Activated CD4-positive, alpha-beta memory T cell treated with anti-CD3 and anti-CD28 coated beads for 36 hours (primary cell): ENCODE measurements at regions of chr7 and their contacts with region 1.

Region 1: DNA sequence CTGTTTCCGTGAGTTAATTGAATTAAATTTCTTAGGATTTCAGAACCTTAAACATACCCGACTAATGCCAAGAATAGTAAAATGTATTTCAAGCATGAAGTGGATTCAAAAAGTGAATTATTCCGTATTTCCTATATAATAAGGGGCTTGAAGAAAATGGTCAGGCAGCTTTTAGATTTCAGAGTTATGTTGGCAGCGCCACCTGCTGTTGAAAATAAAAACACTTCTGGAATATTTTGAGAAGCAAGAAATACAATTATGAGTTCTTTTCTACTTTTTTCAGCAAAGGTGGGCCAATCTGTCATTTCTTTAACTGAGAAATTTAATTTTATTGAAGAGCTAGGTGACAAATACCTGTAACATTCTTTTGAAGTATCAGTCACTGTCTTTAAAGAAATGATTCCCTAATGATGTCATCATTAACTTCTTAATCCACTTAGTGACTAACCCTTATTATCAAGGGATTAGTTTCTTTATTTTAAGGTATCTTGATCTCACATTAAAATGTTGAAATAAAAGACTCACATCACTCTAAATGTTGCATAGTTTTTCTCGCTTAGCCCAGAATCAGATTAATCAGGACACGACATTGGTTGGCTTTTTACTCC is 36.6 kb upstream of the AGR3 start:
- DNase-seq: no peak
- H3K4me3 Mint-ChIP-seq: no peak overlapping the region
- H3K27ac Mint-ChIP-seq: no peak overlapping the region
- H3K4me1 Mint-ChIP-seq: peaks cover 7% of the 10 kb centered on the region
- H3K27me3 Mint-ChIP-seq: no peaks in the 10 kb centered on the region

Region 2: DNA sequence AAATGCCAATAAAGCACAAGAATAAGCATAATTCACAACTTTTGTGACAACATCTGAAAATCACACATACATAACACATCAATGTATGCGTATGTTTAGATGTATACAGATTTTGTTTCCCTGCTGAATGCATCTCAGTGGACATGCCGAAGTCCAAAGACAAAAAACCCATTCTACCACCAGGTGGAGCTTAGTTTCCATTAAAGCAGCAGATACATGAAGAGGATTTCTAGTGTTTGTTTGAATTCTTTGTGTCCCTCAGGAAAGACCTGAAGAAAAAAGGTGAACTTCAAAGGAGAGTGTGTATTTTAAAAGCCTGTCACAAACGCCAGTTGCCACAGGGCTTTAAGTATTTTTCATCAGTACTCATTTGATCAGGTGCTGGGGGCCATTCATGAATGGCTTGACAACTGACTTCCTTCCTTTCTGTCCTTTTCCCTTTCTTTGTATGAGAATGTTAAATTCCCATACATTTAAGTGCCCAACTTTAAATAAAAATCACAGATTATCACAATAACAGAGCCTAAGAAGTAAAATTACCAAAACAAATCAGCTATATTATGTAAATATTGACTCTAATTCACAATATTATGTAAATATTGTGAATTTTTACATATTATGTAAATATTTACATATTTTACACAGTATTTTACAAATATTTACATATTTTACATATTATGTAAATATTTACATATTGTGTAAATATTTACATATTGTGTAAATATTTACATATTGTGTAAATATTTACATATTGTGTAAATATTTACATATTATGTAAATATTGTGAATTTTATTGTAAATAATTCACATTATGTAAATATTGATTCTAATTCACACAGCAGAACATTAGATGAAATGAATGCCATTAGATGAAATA is 840.1 kb before region 1 on chr7:
- CTCF ChIA-PET with region 1: interaction called, 3 read pairs
- POLR2A ChIA-PET with region 1: no interaction called
- intact Hi-C with region 1: loop called (anchors 5 kb)
- DNase-seq: no peak
- H3K4me3 Mint-ChIP-seq: no peak overlapping the region
- H3K27ac Mint-ChIP-seq: no peak overlapping the region
- H3K4me1 Mint-ChIP-seq: no peaks in the 10 kb centered on the region
- H3K27me3 Mint-ChIP-seq: no peaks in the 10 kb centered on the region

Region 3: GRCh38 chr7:16409777-16410176 is 508.6 kb before region 1 on chr7:
- CTCF ChIA-PET with region 1: no interaction called
- POLR2A ChIA-PET with region 1: no interaction called
- intact Hi-C with region 1: no loop called
- DNase-seq: no peak
- H3K4me3 Mint-ChIP-seq: no peak overlapping the region
- H3K27ac Mint-ChIP-seq: no peak overlapping the region
- H3K4me1 Mint-ChIP-seq: no peaks in the 10 kb centered on the region
- H3K27me3 Mint-ChIP-seq: no peaks in the 10 kb centered on the region

Region 4: GRCh38 chr7:16604054-16604453 is 314.3 kb before region 1 on chr7:
- CTCF ChIA-PET with region 1: interaction called, 9 read pairs
- POLR2A ChIA-PET with region 1: no interaction called
- intact Hi-C with region 1: loop called (anchors 1 kb)
- DNase-seq: no peak
- H3K4me3 Mint-ChIP-seq: no peak overlapping the region
- H3K27ac Mint-ChIP-seq: no peak overlapping the region
- H3K4me1 Mint-ChIP-seq: no peaks in the 10 kb centered on the region
- H3K27me3 Mint-ChIP-seq: no peaks in the 10 kb centered on the region

Region 5: GRCh38 chr7:16801111-16801542 is 117.3 kb before region 1 on chr7:
- CTCF ChIA-PET with region 1: interaction called, 48 read pairs
- POLR2A ChIA-PET with region 1: no interaction called
- intact Hi-C with region 1: loop called (anchors 1 kb)
- DNase-seq: no peak
- H3K4me3 Mint-ChIP-seq: no peak overlapping the region
- H3K27ac Mint-ChIP-seq: no peak overlapping the region
- H3K4me1 Mint-ChIP-seq: no peaks in the 10 kb centered on the region
- H3K27me3 Mint-ChIP-seq: peaks cover 7% of the 10 kb centered on the region

Region 6: DNA sequence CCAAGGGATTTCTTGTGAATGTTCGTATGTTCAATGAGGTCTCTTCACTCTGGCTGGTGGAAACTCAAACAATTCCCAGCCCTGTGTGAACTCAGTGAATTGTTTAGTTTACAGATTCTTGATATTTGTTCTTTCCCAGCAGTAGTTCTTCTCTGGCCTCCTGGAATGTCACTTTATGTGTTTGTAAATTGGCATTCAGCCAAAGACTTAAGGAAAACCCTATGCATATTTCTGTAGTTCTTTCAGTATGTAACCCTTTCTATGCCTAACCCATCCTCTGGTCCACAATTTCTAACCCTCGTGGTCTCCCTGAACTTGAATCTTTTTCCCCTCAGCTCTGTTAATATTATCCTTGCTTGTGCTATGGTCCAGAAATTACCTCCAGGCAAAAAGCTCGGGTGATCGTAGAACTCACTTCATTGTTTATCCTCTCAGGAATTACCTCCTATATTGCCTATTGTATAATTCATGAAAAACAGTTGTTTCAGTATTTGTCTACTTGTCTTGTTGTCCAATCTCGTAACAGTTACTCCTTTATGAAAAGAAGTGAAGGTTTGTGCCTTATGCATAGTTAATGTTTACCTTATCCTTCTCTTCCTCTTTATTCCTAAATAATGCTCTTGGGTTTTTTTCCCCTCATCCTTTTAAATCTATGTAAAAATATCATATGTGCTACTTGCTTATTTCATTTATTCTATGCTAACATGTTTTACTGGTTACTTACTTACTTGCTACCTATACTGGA is 12.9 kb before region 1 on chr7:
- CTCF ChIA-PET with region 1: interaction called, 15 read pairs
- POLR2A ChIA-PET with region 1: no interaction called
- intact Hi-C with region 1: no loop called
- DNase-seq: no peak
- H3K4me3 Mint-ChIP-seq: no peak overlapping the region
- H3K27ac Mint-ChIP-seq: no peak overlapping the region
- H3K4me1 Mint-ChIP-seq: no peaks in the 10 kb centered on the region
- H3K27me3 Mint-ChIP-seq: peaks cover 6% of the 10 kb centered on the region

Region 7: DNA sequence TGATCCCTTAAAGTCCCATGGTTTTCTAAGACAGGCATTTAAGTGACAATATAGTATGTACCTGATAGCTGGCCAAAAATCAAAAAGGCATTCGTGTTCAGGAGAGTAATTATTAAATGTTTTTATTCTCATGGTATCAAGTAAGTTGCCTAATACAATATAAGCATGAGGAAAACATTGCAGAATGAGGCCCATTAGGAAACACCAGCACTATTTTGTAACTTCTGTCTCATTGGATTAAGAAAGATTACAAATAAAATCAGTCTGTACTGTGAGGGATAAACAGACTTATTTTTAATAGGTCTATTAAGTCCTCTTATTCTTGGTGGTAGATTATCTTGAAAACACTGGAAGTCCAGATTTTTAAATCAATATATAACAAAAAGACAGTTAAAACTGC is 911.8 kb after region 1 on chr7:
- CTCF ChIA-PET with region 1: no interaction called
- POLR2A ChIA-PET with region 1: no interaction called
- intact Hi-C with region 1: no loop called
- DNase-seq: no peak
- H3K4me3 Mint-ChIP-seq: no peak overlapping the region
- H3K27ac Mint-ChIP-seq: no peak overlapping the region
- H3K4me1 Mint-ChIP-seq: no peaks in the 10 kb centered on the region
- H3K27me3 Mint-ChIP-seq: no peaks in the 10 kb centered on the region